Tibial artery (tissue), 4 donors: ENCODE measurements at regions of chr6 and their contacts with region 1.

Region 1: DNA sequence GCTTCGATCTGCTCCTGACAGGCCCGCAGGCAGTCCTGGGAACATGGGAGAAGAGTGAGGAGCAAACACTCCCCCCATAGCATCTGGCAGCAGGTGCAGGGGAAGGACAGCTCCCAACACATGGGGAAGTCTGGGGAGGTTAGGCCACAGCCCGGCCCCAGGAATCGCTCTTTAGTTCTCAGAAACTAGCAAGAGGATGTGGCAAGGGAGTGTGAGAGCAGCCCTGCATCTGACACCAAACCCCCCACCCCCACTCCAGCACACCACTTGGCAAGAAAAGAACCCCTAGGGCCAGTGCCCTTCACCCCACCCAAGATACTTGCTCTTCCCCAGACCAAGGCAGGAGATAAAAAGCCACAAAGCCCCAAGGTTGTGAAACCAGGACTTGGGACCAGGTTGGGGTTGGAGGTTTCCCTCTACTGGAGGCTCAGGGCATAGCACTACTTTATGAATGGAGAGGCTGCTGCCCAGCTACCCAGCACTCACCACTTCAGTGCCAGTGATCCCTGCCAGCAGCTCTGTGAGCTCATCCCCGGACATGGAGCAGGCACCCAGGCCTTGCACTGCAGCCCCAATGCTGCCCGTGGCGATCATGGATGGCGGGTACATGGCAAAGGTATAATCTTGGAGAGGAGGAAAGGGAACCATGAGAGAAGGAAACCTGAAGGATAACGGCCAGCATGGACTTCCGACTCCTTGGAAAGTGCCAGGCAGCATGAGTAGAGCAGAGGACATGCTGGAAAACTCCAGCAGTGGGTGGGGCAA is 5.4 kb downstream of the CCND3 start:
- DNase-seq: peak; percentile 53 to 71
- H3K4me3 ChIP-seq: no peak overlapping the region
- H3K27ac ChIP-seq: no peak overlapping the region
- H3K4me1 ChIP-seq: peaks cover 0 to 45% (median 18%) of the 10 kb centered on the region in 4 donors
- H3K27me3 ChIP-seq: no peaks in the 10 kb centered on the region
- CTCF ChIP-seq: peak; percentile 72 to 78

Region 2: DNA sequence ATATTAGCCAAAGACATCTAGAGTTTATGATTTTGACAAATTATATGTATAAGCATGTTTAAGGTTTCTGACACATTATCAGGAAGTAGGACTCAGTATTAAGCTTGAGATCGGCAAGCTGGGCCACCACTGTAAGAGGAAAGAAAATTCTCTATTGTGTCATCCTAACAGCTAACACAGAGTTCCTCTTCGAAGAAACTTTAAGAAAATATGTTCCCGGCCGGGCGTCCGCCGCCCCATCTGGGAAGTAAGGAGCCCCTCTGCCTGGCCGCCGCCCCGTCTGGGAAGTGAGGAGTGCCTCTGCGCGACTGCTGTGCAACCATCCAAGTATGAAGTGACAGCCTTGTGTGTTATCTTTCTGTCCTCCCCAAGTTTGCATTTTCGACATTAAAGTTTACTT is 64.1 kb before region 1 on chr6:
- intact Hi-C with region 1: no loop called
- DNase-seq: no peak
- H3K4me3 ChIP-seq: no peak overlapping the region
- H3K27ac ChIP-seq: no peak overlapping the region
- H3K4me1 ChIP-seq: no peaks in the 10 kb centered on the region
- H3K27me3 ChIP-seq: no peaks in the 10 kb centered on the region
- CTCF ChIP-seq: no peak

Region 3: GRCh38 chr6:42021847-42022754 is 85.8 kb after region 1 on chr6:
- intact Hi-C with region 1: no loop called
- DNase-seq: no peak
- H3K4me3 ChIP-seq: no peak overlapping the region
- H3K27ac ChIP-seq: no peak overlapping the region
- H3K4me1 ChIP-seq: peaks cover 0 to 13% (median 6%) of the 10 kb centered on the region in 4 donors
- H3K27me3 ChIP-seq: no peaks in the 10 kb centered on the region
- CTCF ChIP-seq: no peak

Region 4: DNA sequence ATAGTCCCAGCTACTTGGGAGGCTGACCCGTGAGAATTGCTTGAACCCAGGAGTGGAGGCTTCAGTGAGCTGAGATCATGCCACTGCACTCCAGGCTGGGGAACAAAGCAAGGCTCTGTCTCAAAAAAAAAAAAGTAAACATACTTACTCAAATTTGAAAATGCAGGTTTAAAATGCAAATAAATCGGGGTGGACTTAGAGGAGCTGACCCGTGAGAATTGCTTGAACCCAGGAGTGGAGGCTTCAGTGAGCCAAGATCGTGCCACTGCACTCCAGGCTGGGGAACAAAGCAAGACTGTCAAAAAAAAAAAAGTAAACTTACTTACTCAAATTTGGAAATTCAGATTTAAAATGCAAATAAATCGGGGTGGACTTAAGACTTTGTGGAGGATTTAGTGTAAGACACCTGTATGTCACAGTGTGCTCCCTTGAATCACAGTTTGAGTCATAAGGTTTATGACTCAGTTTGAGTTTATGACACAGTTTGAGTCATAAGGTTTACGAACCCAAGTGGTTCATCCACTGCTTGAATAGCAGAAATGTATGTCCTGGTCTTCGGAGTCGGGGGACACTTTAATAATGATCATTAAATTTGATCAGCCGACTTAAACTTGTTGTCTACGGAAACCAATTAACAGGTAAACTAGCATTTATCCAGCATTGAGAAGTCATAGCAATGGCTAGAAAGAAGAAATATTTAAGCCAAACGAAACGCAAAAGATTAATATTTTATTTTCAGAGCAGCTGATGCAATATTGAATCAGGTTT is 288.2 kb after region 1 on chr6:
- intact Hi-C with region 1: loop called (anchors 10 kb)
- DNase-seq: no peak
- H3K4me3 ChIP-seq: no peak overlapping the region
- H3K27ac ChIP-seq: no peak overlapping the region
- H3K4me1 ChIP-seq: no peaks in the 10 kb centered on the region
- H3K27me3 ChIP-seq: no peaks in the 10 kb centered on the region
- CTCF ChIP-seq: no peak